IMR-90 (cell line): ENCODE measurements at regions of chr1 and their contacts with region 1.

Region 1: GRCh38 chr1:206912445-206913095 is 9.2 kb downstream of the FCMR start:
- DNase-seq: peak; percentile 75
- ATAC-seq: peak; percentile 80
- H3K4me3 ChIP-seq: no peak overlapping the region
- H3K27ac ChIP-seq: no peak overlapping the region
- H3K4me1 ChIP-seq: peaks cover 3% of the 10 kb centered on the region
- H3K27me3 ChIP-seq: peaks cover 37% of the 10 kb centered on the region
- CTCF ChIP-seq: peak; percentile 89
- POLR2A ChIP-seq: 0 out of 2 replicates have a peak, but pooled peaks have one; percentile 24
- RAD21 ChIP-seq: peak; percentile 90

Region 2: GRCh38 chr1:206489980-206490770 is 422.4 kb before region 1 on chr1:
- CTCF ChIA-PET with region 1: no interaction called
- POLR2A ChIA-PET with region 1: no interaction called
- dilution Hi-C with region 1: no loop called
- in situ Hi-C with region 1: loop called (anchors 10 kb)
- intact Hi-C with region 1: loop called (anchors 5 kb)
- DNase-seq: peak; percentile 69
- ATAC-seq: peak; percentile 98
- H3K4me3 ChIP-seq: no peak overlapping the region
- H3K27ac ChIP-seq: no peak overlapping the region
- H3K4me1 ChIP-seq: peaks cover 4% of the 10 kb centered on the region
- H3K27me3 ChIP-seq: no peaks in the 10 kb centered on the region
- CTCF ChIP-seq: peak; percentile 96
- POLR2A ChIP-seq: peak; percentile 53; the same call in 1 of the 2 replicates
- RAD21 ChIP-seq: peak; percentile 99

Region 3: DNA sequence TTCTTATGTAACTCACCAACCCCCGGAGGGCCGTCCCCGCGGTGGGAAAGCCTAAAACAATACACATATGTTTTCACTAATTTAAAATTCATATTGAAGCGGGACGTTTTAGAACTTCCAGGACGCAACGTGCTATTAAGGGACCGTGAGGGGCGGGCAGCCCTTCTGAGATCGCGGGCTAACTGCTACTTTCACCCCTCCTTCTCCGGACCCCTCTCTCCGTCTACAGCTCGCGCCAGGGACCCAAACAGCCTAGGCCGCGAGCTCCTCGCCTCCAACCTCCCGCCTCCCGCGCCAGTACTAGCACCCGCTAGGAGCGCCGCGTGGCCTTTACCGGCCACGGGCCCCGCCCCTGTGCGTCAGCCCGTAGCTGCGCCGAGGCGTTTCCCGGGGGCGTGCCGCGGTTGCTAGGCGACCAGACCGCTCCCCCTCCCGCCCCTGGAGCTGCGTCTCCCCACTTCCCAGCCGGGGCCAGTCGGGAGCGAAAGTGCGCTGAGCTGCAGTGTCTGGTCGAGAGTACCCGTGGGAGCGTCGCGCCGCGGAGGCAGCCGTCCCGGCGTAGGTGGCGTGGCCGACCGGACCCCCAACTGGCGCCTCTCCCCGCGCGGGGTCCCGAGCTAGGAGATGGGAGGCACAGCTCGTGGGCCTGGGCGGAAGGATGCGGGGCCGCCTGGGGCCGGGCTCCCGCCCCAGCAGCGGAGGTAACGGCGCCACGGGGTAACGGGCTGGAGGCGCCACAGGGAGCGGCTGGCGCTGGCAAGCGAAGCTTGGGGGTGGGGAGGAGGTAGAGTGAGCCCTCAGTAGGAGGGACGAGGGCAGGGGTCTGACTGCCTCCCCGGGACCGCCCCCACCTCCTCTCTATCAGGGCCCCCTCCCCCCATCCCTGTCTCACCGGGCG is 277.2 kb before region 1 on chr1 and contains the start of gene DYRK3:
- CTCF ChIA-PET with region 1: interaction called, 7 read pairs
- POLR2A ChIA-PET with region 1: no interaction called
- dilution Hi-C with region 1: no loop called
- in situ Hi-C with region 1: no loop called
- intact Hi-C with region 1: loop called (anchors 1 kb)
- DNase-seq: peak; percentile 92
- ATAC-seq: peak; percentile 88
- H3K4me3 ChIP-seq: peak within 1 kb of the TSS; percentile 94
- H3K27ac ChIP-seq: peak within 1 kb of the TSS; percentile 69
- H3K4me1 ChIP-seq: peaks cover 8% of the 10 kb centered on the region
- H3K27me3 ChIP-seq: no peaks in the 10 kb centered on the region
- CTCF ChIP-seq: peak; percentile 8; the same call in 1 of the 2 replicates
- POLR2A ChIP-seq: peak; percentile 96
- RAD21 ChIP-seq: no peak
- total RNA-seq, gene DYRK3: 21.1 and 22.0 TPM in 2 replicates

Region 4: DNA sequence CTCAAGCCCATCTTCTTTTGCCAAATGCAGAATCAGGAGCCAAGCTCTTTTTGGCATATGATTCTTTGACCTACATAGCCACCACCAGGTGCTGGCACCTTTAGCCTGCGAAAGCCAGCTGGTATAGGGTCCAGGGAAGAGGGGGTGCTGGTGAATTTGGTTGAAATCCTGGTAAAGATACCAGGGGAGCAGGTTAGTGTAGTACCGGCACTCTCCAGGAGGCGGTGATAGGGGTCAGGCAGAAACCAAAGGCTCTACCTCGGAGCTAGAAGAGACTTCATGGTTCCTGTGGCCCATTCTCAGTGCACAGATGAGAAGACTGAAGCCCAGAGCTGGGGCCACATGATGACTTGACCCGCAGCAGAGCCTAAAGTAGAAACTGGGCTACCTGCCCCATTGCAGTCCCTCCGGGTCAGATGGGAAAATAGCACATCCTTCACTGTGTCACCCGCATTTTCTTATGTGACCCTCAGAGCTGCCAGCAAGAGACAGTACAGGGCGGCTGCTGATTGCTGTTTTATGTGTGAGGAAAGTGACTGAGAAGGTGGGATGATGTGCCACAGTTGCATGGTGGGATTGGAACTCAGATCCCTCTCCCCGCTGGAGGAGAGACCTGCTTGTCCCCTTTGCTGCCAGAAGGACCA is 177.9 kb before region 1 on chr1:
- CTCF ChIA-PET with region 1: interaction called, 17 read pairs
- POLR2A ChIA-PET with region 1: no interaction called
- dilution Hi-C with region 1: no loop called
- in situ Hi-C with region 1: loop called (anchors 5 kb)
- intact Hi-C with region 1: loop called (anchors 1 kb)
- DNase-seq: peak; percentile 37
- ATAC-seq: peak; percentile 70
- H3K4me3 ChIP-seq: no peak overlapping the region
- H3K27ac ChIP-seq: no peak overlapping the region
- H3K4me1 ChIP-seq: peaks cover 13% of the 10 kb centered on the region
- H3K27me3 ChIP-seq: no peaks in the 10 kb centered on the region
- CTCF ChIP-seq: peak; percentile 78
- POLR2A ChIP-seq: no peak
- RAD21 ChIP-seq: peak; percentile 84

Region 5: DNA sequence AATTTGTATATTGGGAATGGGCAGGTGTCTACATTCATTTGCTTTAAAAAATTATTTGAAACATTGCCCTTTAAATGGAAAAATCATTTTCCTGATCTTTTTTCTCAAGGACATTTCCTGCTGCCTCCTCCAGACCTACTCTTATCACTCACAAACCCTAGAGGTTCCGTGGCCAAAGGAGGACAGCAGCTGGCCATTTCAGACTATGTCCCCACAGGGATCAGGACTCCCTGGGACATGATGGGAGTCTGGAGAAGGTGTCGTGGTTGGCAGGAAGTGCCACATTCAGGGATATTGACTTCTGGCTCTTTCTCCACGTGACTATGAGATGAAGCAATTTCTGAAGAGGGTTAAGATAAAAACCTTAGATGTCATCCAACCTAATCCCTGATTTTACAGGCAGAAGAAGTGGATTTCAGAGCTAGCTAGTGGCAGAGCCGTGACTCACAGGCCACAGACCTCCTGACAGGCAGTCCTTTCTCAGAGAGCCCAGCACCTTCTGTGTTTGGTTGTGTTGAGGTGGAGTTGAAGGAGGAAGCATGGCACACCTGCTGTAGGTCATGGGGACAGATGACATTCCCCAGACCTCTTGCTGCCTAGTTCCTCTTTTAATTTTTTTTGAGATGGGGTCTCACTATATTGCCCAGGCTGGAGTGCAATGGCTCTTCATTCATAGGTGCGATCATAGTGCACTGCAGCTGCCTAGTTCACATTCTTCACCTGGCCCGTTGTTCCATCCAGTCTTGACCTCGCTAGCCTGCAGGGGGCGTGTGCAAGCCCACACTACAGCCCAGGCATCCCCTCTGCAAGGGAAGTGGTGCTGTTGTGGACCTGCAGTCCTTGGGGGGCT is 114.8 kb before region 1 on chr1:
- CTCF ChIA-PET with region 1: no interaction called
- POLR2A ChIA-PET with region 1: no interaction called
- dilution Hi-C with region 1: no loop called
- in situ Hi-C with region 1: no loop called
- intact Hi-C with region 1: no loop called
- DNase-seq: no peak
- ATAC-seq: no peak
- H3K4me3 ChIP-seq: no peak overlapping the region
- H3K27ac ChIP-seq: no peak overlapping the region
- H3K4me1 ChIP-seq: no peaks in the 10 kb centered on the region
- H3K27me3 ChIP-seq: no peaks in the 10 kb centered on the region
- CTCF ChIP-seq: peak; percentile 25; the same call in 1 of the 2 replicates
- POLR2A ChIP-seq: no peak
- RAD21 ChIP-seq: peak; percentile 11; the same call in 1 of the 2 replicates

Region 6: GRCh38 chr1:206865013-206865671 is 47.4 kb before region 1 on chr1 and contains the start of gene IL20:
- CTCF ChIA-PET with region 1: interaction called, 12 read pairs
- POLR2A ChIA-PET with region 1: no interaction called
- dilution Hi-C with region 1: no loop called
- in situ Hi-C with region 1: no loop called
- intact Hi-C with region 1: loop called (anchors 1 kb)
- DNase-seq: peak; percentile 80
- ATAC-seq: peak; percentile 64
- H3K4me3 ChIP-seq: no peak within 1 kb of the TSS
- H3K27ac ChIP-seq: peak within 1 kb of the TSS; percentile 18; the same call in 1 of the 2 replicates
- H3K4me1 ChIP-seq: peaks cover 6% of the 10 kb centered on the region
- H3K27me3 ChIP-seq: peaks cover 5% of the 10 kb centered on the region; the same call in 1 of the 2 replicates
- CTCF ChIP-seq: peak; percentile 87
- POLR2A ChIP-seq: no peak
- RAD21 ChIP-seq: peak; percentile 74
- total RNA-seq, gene IL20: not detected in 2 replicates

Region 7: DNA sequence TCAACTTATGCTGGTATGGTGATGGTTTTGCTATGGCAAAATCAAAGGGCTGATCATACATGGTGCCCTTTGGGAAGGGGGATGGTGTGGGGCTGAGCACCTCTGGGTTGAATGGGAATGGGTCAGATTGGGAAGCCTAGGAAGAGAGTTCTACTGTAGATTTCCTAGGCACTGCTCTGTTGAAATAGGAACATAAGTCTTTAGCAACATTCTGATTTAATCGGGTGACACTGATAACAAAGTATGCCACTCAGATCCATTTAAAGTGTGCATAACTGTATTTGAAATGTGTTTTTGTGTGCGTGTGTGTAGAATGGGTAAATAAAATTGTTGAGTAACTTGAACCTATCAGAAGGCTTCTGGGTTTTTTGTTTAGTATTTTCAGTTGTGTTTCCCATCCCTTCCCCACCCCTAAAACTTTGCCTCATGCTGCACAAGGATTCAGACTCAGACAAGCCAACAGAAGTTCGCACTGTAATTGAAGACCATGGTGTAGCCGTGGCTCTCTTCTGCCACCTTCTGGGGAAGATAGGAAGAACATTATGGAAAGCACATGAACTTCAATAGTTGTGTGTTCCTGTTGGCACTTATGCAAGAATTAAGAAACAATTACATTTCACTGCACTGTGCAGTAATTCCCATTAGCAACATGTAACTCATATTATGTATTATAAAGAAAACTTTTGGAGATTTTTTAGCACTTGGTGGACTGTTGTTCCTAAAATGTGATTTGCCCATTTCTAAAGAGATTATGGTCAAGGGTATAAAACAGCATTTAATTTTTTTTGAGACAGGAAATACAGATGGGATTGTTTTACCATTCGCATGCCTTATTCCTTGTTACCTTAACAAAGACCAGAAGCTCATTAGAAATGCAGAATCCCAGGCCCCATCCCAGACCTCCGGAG is 165.2 kb after region 1 on chr1:
- CTCF ChIA-PET with region 1: no interaction called
- POLR2A ChIA-PET with region 1: no interaction called
- dilution Hi-C with region 1: no loop called
- in situ Hi-C with region 1: no loop called
- intact Hi-C with region 1: loop called (anchors 10 kb)
- DNase-seq: peak; percentile 77
- ATAC-seq: peak; percentile 99
- H3K4me3 ChIP-seq: no peak overlapping the region
- H3K27ac ChIP-seq: no peak overlapping the region
- H3K4me1 ChIP-seq: no peaks in the 10 kb centered on the region
- H3K27me3 ChIP-seq: peaks cover 6% of the 10 kb centered on the region
- CTCF ChIP-seq: peak; percentile 91
- POLR2A ChIP-seq: no peak
- RAD21 ChIP-seq: peak; percentile 89